ENCODE measurements at regions of chr15 and their contacts with region 1.

Region 1: GRCh38 chr15:101162626-101163102 is 89.2 kb downstream of the CHSY1 start:
- DNase-seq: peak; percentile 86

Region 2: DNA sequence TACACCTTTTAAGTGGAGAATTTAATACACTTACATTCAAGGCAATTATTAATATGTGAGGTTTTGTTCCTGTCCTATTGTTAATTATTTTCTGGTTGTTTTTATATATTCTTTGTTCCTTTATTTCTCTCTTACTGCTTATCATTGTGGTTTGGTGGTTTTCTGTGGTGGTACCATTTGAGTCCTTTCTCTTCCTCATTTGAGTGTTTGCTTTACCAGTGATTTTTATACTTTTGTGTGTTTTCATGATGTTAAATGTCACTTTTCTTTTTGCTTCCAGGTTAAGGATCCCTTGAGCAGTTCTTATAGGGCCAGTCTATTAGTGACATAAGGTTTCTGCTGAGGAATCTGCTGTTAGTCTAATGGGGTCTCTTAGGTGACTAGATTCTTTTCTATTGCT is 127.1 kb before region 1 on chr15:
- intact Hi-C with region 1: no loop called
- DNase-seq: no peak

Region 3: GRCh38 chr15:101127506-101128076 is 35.1 kb before region 1 on chr15:
- intact Hi-C with region 1: loop called (anchors 5 kb)
- DNase-seq: no peak

Measured in cardiac septum (tissue), 1 donor.